ENCODE measurements at regions of chr12 and their contacts with region 1.

Region 1: DNA sequence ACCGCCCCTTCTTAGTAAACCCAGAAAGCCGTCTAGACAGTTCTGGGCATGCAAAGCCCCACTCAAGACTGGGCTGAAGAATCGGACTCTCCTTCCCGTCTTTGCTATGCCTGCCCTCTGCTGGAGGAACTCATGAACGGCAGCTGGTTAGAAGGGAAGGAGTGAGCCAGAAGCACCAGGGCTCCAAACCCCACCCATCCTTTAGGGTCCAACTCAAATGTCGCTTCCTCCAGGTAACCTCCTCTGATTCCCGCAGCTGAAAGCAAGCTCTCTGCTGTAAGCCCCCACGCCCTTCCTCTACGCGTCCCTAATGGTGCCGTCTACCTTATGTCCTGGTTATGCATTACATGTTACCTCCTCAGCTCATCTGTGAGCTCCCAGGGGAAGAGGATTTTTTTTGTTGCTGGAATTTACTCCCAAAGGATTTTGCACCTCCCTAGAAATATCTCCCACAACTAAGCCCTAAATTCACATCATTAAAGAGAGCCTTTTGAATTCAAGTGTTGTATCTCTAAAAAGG is 59.0 kb upstream of the SCN8A start:
- DNase-seq: peak; percentile 82
- H3K4me3 ChIP-seq: no peak overlapping the region
- H3K27ac ChIP-seq: no peak overlapping the region
- H3K4me1 ChIP-seq: no peaks in the 10 kb centered on the region
- H3K27me3 ChIP-seq: peaks cover 2% of the 10 kb centered on the region
- CTCF ChIP-seq: peak; percentile 86

Region 2: DNA sequence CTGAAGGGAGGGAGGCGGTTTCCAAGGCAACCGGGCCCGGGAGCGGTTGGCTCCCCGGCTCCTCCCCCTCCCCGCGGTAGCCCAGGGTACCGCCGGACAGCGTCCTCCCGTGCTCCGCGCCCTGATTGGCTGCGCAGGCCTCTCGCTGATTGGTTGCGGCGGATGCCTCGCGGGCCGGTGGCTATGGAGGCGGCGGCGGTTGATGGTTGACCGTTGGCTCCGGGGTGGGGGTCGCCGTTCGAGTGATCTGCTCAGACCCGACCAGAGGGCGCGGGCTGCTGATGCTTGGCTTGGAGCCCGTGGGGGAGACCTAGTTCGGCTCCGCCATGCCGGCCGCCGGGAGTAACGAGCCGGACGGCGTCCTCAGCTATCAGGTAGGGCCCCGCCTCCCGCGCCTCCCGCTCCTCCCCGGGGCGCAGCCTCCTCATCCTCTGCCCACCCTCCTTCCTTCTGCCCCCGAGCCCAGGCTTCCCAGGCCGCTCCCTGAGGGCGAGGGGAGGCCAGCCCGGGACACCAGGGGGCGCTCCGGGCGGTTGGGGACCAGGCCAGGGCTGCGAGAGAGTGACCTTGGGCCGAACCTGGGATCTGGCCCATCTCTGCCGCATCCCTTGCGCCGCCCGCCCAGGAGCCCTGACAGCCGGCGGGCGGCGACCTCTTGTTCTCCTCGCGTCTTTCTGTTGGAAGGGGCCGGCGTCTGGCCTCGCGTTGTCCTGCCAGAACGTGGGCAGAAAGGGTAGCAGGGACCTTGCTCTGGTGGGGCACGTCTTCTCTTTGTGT is 107.2 kb before region 1 on chr12 and contains the start of gene SLC4A8:
- CTCF ChIA-PET with region 1: interaction called, 10 read pairs
- POLR2A ChIA-PET with region 1: no interaction called
- intact Hi-C with region 1: loop called (anchors 1 kb)
- DNase-seq: peak; percentile 86
- H3K4me3 ChIP-seq: peak within 1 kb of the TSS; percentile 40
- H3K27ac ChIP-seq: no peak within 1 kb of the TSS
- H3K4me1 ChIP-seq: peaks cover 4% of the 10 kb centered on the region
- H3K27me3 ChIP-seq: peaks cover 9% of the 10 kb centered on the region
- CTCF ChIP-seq: peak; percentile 76
- total RNA-seq, gene SLC4A8: 0.73 and 1.1 TPM in 2 replicates

Region 3: GRCh38 chr12:51678086-51678724 is 146.2 kb after region 1 on chr12:
- CTCF ChIA-PET with region 1: no interaction called
- POLR2A ChIA-PET with region 1: no interaction called
- intact Hi-C with region 1: loop called (anchors 5 kb)
- DNase-seq: peak; percentile 76
- H3K4me3 ChIP-seq: no peak overlapping the region
- H3K27ac ChIP-seq: peak overlapping the region; percentile 24
- H3K4me1 ChIP-seq: peaks cover 14% of the 10 kb centered on the region
- H3K27me3 ChIP-seq: no peaks in the 10 kb centered on the region
- CTCF ChIP-seq: peak; percentile 76

Region 4: DNA sequence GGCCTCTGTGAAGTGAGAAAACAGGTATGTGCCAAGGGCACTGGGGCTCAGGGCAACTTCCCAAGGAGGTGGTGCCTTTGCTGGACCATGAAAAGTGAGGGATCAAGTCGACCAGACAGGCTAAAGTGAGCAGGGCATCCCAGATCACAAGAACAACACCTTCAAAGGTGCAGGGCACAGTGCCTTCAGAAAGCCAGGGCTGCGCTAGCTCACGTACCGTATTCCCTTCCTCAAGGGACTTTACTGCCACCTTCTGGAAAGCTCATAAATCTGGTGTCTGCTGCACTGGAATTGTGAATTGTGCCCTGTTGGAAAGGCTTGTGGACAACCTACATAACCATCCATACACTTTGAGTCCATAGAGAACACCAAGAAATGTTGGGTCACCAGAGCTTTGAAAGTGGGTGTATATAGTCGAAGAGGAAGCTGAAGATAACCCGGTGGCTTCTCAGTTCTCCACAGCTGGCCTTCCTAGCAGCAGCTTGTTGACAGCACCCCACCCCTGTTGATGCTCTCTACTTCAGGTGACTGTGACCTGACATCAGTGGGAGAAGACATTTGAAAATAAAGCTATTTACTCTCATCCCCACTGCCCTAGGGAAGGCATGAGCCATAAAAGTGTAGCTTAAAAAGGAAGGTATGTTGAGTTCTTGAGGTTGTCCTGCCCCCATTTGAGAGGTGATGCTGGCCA is 292.0 kb after region 1 on chr12:
- CTCF ChIA-PET with region 1: interaction called, 12 read pairs
- POLR2A ChIA-PET with region 1: no interaction called
- intact Hi-C with region 1: loop called (anchors 2 kb)
- DNase-seq: peak; percentile 82
- H3K4me3 ChIP-seq: no peak overlapping the region
- H3K27ac ChIP-seq: no peak overlapping the region
- H3K4me1 ChIP-seq: no peaks in the 10 kb centered on the region
- H3K27me3 ChIP-seq: no peaks in the 10 kb centered on the region
- CTCF ChIP-seq: peak; percentile 70

Region 5: GRCh38 chr12:51871126-51871525 is 339.1 kb after region 1 on chr12:
- CTCF ChIA-PET with region 1: interaction called, 4 read pairs
- POLR2A ChIA-PET with region 1: no interaction called
- intact Hi-C with region 1: loop called (anchors 10 kb)
- DNase-seq: no peak
- H3K4me3 ChIP-seq: no peak overlapping the region
- H3K27ac ChIP-seq: no peak overlapping the region
- H3K4me1 ChIP-seq: peaks cover 25% of the 10 kb centered on the region
- H3K27me3 ChIP-seq: no peaks in the 10 kb centered on the region
- CTCF ChIP-seq: no peak